ENCODE measurements at regions of chr3 and their contacts with region 1.

Region 1: GRCh38 chr3:47145272-47145671 is 18.6 kb downstream of the SETD2 start:
- DNase-seq: no peak
- ATAC-seq: no peak
- H3K4me3 ChIP-seq: no peak overlapping the region
- H3K27ac ChIP-seq: no peak overlapping the region
- H3K4me1 ChIP-seq: peaks cover 18% of the 10 kb centered on the region
- H3K27me3 ChIP-seq: no peaks in the 10 kb centered on the region
- CTCF ChIP-seq: no peak
- EP300 ChIP-seq: no peak
- POLR2A ChIP-seq: no peak
- RAD21 ChIP-seq: no peak

Region 2: GRCh38 chr3:46017720-46018119 is 1127.6 kb before region 1 on chr3:
- CTCF ChIA-PET with region 1: no interaction called
- POLR2A ChIA-PET with region 1: no interaction called
- RAD21 ChIA-PET with region 1: no interaction called
- SMC1A ChIA-PET with region 1: no interaction called
- in situ Hi-C with region 1: no loop called
- intact Hi-C with region 1: no loop called
- DNase-seq: no peak
- ATAC-seq: peak; percentile 69
- H3K4me3 ChIP-seq: no peak overlapping the region
- H3K27ac ChIP-seq: no peak overlapping the region
- H3K4me1 ChIP-seq: no peaks in the 10 kb centered on the region
- H3K27me3 ChIP-seq: no peaks in the 10 kb centered on the region
- CTCF ChIP-seq: no peak
- EP300 ChIP-seq: no peak
- POLR2A ChIP-seq: no peak
- RAD21 ChIP-seq: no peak

Region 3: DNA sequence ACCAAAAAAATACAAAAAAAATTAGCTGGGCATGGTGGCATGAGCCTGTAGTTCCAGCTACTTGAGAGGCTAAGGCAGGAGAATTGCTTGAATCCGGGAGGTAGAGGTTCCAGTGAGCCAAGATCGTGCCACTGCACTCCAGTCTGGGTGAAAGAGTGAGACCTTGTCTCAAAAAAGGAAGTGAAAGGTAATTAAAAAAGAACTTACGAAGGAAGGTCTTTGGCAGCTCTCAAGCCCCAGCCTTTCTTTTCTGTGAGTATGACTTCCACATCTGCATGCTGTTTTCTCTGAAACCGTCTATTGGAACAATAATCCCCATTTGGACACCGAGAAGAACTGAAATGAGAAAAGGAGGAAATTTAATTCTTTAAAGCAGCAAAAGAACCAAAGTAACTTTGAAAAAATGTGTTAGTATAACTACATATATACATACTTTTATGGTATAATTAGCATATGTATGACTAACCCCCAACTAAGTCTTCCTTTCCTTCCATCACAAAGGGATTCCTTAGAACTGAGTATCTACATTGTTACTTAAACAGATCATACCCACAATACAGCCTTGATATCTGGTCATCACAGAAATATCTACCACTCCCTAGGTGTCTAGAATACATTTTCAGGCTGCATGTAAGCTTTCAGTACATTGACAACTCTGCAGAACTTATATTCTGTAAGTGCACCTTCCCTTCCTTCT is 31.5 kb before region 1 on chr3:
- CTCF ChIA-PET with region 1: no interaction called
- POLR2A ChIA-PET with region 1: interaction called, 10 read pairs
- RAD21 ChIA-PET with region 1: interaction called, 4 read pairs
- SMC1A ChIA-PET with region 1: interaction called, 11 read pairs
- in situ Hi-C with region 1: no loop called
- intact Hi-C with region 1: no loop called
- DNase-seq: peak; percentile 20
- ATAC-seq: peak; percentile 93
- H3K4me3 ChIP-seq: no peak overlapping the region
- H3K27ac ChIP-seq: peak overlapping the region; percentile 36; the same call in 1 of the 2 replicates
- H3K4me1 ChIP-seq: peaks cover 10% of the 10 kb centered on the region; the same call in 1 of the 2 replicates
- H3K27me3 ChIP-seq: no peaks in the 10 kb centered on the region
- CTCF ChIP-seq: no peak
- EP300 ChIP-seq: no peak
- POLR2A ChIP-seq: no peak
- RAD21 ChIP-seq: no peak

Region 4: DNA sequence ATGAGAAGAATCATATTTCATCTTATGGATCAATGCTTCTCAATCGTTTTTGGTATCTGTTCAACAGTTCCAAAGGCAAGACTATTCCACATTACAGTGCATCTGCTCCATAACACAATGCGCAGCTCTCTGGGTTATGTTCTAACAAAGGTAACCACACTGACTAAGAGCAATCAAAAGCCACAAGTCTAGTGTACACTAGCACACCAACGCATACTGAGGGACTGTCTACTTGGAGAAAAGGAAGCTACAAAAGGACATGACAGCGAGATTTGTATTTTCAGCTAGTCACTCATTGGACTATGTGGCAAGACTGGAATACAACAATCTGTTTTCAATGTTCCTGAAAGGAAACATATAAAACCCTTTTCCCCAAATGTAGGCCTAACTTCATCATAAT is 17.1 kb before region 1 on chr3:
- CTCF ChIA-PET with region 1: interaction called, 3 read pairs
- POLR2A ChIA-PET with region 1: interaction called, 6 read pairs
- RAD21 ChIA-PET with region 1: interaction called, 7 read pairs
- SMC1A ChIA-PET with region 1: interaction called, 12 read pairs
- in situ Hi-C with region 1: no loop called
- intact Hi-C with region 1: no loop called
- DNase-seq: no peak
- ATAC-seq: no peak
- H3K4me3 ChIP-seq: no peak overlapping the region
- H3K27ac ChIP-seq: no peak overlapping the region
- H3K4me1 ChIP-seq: no peaks in the 10 kb centered on the region
- H3K27me3 ChIP-seq: no peaks in the 10 kb centered on the region
- CTCF ChIP-seq: no peak
- EP300 ChIP-seq: no peak
- POLR2A ChIP-seq: no peak
- RAD21 ChIP-seq: no peak

Region 5: GRCh38 chr3:47133641-47134040 is 11.6 kb before region 1 on chr3:
- CTCF ChIA-PET with region 1: interaction called, 3 read pairs
- POLR2A ChIA-PET with region 1: interaction called, 7 read pairs
- RAD21 ChIA-PET with region 1: interaction called, 7 read pairs
- SMC1A ChIA-PET with region 1: interaction called, 12 read pairs
- in situ Hi-C with region 1: no loop called
- intact Hi-C with region 1: no loop called
- DNase-seq: no peak
- ATAC-seq: no peak
- H3K4me3 ChIP-seq: no peak overlapping the region
- H3K27ac ChIP-seq: no peak overlapping the region
- H3K4me1 ChIP-seq: no peaks in the 10 kb centered on the region
- H3K27me3 ChIP-seq: no peaks in the 10 kb centered on the region
- CTCF ChIP-seq: no peak
- EP300 ChIP-seq: no peak
- POLR2A ChIP-seq: no peak
- RAD21 ChIP-seq: no peak